Transverse colon (tissue), 4 donors: ENCODE measurements at regions of chr19 and their contacts with region 1.

Region 1: GRCh38 chr19:51681321-51682168 is 11.6 kb upstream of the SPACA6 start:
- DNase-seq: no peak
- H3K4me3 ChIP-seq: no peak overlapping the region
- H3K27ac ChIP-seq: no peak overlapping the region
- H3K4me1 ChIP-seq: no peaks in the 10 kb centered on the region
- H3K27me3 ChIP-seq: peaks cover 7% of the 10 kb centered on the region
- CTCF ChIP-seq: no peak
- EP300 ChIP-seq: no peak
- POLR2A ChIP-seq: no peak

Region 2: DNA sequence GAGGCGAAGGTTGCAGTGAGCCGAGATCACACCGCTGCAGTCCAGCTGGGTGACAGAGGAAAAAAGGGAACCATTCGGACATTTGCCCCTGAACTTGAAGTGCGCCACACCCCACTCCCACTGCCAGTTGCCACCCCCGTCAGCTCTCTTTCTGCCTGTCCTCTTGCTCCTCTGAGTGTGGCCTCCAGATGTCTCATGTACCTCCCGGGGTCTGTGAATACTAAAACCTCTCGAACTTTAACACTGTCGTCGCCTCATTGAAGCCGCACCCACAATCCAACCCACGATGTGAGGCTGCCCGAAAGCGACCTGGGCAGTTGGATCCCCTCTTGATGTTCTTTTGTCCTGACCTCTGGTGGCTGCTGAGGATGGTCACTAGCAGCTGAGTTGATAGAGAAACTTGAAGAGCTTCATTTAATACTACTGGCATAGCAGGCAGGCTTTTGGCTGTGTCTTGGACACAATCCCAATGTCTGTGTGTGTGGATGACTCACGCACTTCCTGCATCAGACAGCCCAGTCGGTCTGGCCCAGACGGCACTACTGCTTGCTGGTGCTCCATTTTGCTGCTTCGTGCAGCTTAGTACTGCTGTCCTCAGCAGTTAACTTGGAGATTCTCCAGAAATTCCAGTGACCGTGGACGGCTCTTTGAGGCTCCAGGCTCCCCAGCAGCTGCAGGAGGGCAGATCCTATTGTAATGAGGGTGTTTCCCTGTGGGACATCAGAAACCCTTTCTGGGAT is 117.7 kb after region 1 on chr19:
- in situ Hi-C with region 1: no loop called
- intact Hi-C with region 1: no loop called
- DNase-seq: peak; percentile 58
- H3K4me3 ChIP-seq: no peak overlapping the region
- H3K27ac ChIP-seq: peak overlapping the region; percentile 42 to 77 (median 66)
- H3K4me1 ChIP-seq: peaks cover 0 to 5% (median 0%) of the 10 kb centered on the region in 4 donors
- H3K27me3 ChIP-seq: no peaks in the 10 kb centered on the region
- CTCF ChIP-seq: no peak
- EP300 ChIP-seq: no peak
- POLR2A ChIP-seq: no peak

Region 3: DNA sequence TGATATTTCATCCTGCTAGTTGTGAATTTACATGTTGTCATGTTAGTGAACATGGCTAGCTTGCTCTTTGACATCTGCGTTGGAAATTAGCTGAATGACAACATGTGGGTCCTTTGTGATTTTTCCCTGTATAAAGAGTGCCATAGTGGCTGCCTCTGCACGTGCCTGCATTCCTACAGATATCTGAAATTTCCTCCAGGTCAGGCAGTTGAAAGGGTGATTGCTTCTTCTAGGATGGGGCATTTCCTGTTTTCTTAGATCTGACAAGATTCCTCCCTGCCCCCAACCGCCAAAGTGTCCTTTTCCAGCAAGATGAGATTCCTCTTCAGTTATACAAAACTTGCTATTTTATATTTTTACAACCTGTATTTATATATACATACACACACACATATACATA is 1692.7 kb after region 1 on chr19:
- in situ Hi-C with region 1: no loop called
- intact Hi-C with region 1: loop called (anchors 5 kb)
- DNase-seq: no peak
- H3K4me3 ChIP-seq: no peak overlapping the region
- H3K27ac ChIP-seq: no peak overlapping the region
- H3K4me1 ChIP-seq: no peaks in the 10 kb centered on the region
- H3K27me3 ChIP-seq: no peaks in the 10 kb centered on the region
- CTCF ChIP-seq: no peak
- EP300 ChIP-seq: no peak
- POLR2A ChIP-seq: no peak